HEK293 (cell line): ENCODE measurements at regions of chrX and their contacts with region 1.

Region 1: DNA sequence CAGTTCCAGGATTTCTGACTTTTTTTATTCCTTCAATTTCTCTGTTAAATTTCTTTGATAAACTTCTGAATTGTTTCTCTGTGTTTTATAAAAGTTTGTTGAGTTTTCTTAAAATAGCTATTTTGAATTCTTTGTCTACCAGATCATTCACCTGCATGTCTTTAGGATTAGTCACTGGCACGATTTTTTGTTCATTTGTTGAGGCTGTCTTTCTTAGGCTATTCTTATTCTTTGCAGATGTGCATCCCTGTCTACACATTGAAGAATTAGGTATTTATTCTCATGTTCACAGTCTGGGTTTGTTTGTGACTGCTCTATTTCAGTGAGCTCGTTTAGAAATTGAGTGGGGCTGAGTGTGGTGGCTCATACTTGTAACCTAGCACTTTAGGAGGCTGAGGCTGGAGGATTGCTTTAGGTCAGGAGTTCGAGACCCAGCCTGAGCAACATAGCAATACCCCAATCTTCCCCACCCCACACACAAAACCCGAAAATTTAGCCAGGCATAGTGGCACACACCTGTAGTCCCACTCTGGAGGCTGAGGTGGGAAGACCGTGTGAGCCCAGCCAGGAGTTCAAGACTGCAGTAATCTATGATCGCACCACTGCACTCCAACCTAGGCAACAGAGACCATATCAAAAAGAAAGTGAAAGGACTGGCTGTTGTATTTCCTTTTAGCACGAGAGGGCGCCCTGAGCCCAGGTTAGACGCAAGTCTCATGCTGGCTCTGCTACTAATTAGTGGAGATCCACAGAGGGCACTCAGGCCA is 42.0 kb downstream of the F8 start:
- H3K4me3 ChIP-seq: no peak overlapping the region; the same call in 1 of the 2 replicates
- H3K27ac ChIP-seq: no peak overlapping the region
- H3K4me1 ChIP-seq: no peaks in the 10 kb centered on the region
- CTCF ChIP-seq: peak; percentile 87

Region 2: DNA sequence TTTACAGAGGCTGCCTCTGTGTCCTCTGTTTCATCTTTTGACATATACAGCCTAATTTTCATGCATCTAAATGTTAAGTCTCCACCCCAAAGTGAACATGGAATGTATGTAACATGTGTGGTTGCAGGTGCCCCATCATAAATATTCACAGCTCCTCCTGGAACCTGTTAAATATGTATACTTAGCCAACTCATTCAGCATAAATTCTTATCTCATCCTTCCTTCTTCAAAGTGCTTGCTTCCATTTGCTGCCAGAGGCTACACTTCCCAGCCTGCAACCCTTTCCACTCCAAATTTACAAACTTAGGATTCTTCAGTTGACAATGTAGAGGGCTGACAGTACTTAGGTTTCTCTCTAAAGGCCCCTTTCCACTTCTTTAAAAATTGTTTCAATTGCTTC is 18.6 kb before region 1 on chrX:
- CTCF ChIA-PET with region 1: no interaction called
- POLR2A ChIA-PET with region 1: no interaction called
- H3K4me3 ChIP-seq: no peak overlapping the region
- H3K27ac ChIP-seq: no peak overlapping the region
- H3K4me1 ChIP-seq: no peaks in the 10 kb centered on the region
- CTCF ChIP-seq: no peak

Region 3: GRCh38 chrX:155048977-155049619 is 68.6 kb after region 1 on chrX:
- CTCF ChIA-PET with region 1: interaction called, 13 read pairs
- POLR2A ChIA-PET with region 1: no interaction called
- H3K4me3 ChIP-seq: no peak overlapping the region
- H3K27ac ChIP-seq: no peak overlapping the region
- H3K4me1 ChIP-seq: no peaks in the 10 kb centered on the region
- CTCF ChIP-seq: peak; percentile 54

Region 4: DNA sequence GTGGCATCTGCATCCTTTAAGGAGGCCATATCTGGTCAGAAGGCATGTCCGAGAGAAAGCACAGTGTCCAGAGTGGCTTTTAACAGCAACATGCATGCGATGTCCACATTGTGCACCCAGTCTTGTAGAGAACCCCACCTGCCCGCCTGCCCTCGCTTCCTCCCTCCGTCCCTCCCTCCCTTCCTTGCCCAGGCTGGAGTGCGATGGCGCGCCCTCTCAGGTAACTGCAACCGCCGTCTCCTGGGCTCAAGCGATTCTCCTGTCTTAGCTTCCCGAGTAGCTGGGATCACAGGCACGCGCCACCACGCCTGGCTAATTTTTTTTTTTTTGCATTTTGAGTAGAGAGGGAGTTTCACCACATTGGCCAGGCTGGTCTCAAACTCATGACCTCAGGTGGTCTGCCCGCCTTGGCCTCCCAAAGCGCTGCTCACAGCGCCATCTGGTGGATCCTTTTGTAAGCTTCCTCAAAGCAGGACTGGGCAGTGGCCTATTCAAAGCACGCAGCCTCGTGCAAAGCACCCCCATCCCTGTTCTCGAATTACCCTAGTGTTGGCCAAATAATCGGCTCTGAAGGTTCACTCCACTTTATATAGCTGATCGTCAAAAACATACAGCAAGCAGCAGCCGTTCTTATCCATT is 105.8 kb after region 1 on chrX:
- CTCF ChIA-PET with region 1: interaction called, 11 read pairs
- POLR2A ChIA-PET with region 1: no interaction called
- H3K4me3 ChIP-seq: no peak overlapping the region
- H3K27ac ChIP-seq: no peak overlapping the region
- H3K4me1 ChIP-seq: no peaks in the 10 kb centered on the region
- CTCF ChIP-seq: peak; percentile 46